ENCODE measurements at regions of chr16 and their contacts with region 1.

Region 1: DNA sequence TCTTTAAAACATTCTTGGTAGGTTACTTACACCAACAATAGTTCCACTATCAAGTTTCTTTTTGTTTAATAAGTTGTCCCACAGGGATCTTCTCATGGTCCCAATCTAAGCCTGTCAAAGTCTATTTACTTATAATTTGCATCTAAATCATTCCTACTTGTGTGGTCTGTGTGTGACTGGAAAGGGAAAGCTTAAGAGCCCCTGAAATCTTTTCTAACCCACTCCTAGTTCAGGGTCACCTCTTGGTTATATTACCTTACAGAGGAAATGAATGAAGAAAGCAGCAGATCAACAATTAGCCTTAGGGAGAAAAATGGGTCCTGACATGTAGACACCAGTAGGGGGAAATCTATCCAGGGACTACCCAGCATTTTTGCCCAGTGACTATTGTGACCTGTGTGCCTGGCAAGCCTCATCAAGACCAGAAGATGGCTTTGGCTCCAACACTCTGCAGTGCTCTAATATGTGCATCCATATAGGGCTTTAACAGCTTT is 110.4 kb upstream of the HAS3 start:
- DNase-seq: peak; percentile 53
- H3K4me3 ChIP-seq: no peak overlapping the region
- H3K27ac ChIP-seq: peak overlapping the region; percentile 69
- H3K4me1 ChIP-seq: peaks cover 40% of the 10 kb centered on the region
- H3K27me3 ChIP-seq: no peaks in the 10 kb centered on the region
- CTCF ChIP-seq: peak; percentile 34 to 48
- POLR2A ChIP-seq: no peak

Region 2: GRCh38 chr16:68943961-68944360 is 51.1 kb before region 1 on chr16:
- CTCF ChIA-PET with region 1: no interaction called
- POLR2A ChIA-PET with region 1: no interaction called
- dilution Hi-C with region 1: no loop called
- intact Hi-C with region 1: no loop called
- DNase-seq: no peak
- H3K4me3 ChIP-seq: no peak overlapping the region
- H3K27ac ChIP-seq: no peak overlapping the region
- H3K4me1 ChIP-seq: no peaks in the 10 kb centered on the region
- H3K27me3 ChIP-seq: no peaks in the 10 kb centered on the region
- CTCF ChIP-seq: no peak
- POLR2A ChIP-seq: no peak

Region 3: DNA sequence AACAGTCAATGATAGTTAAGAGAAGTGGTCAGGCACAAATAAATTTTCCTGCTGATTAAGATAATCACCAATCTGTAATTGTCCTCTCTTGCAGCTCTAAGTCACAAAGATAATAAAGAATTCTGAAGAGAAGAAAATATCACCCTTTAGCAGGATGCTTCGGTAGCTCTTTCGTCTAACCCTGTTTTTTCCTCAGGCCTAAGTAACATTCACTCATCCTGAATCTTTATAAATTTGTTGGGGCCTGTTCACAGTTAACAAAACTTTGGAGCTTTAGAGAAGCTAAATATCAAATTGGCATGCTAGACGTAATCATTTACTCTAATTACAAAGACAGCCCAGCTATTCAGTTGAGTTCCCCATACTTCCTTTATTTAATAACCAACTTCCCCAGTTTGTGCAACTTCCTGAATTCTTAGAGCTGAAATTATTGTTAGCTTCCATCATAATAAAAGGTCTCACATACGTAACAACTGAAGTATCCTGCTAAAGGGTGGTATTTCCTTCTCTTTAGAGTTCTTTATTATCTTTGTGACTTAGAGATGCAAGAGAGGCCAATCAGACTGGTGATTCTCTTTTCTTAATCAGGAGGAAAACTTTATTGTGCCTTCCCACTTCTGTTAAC is 33.2 kb before region 1 on chr16:
- CTCF ChIA-PET with region 1: interaction called, 4 read pairs
- POLR2A ChIA-PET with region 1: no interaction called
- dilution Hi-C with region 1: no loop called
- intact Hi-C with region 1: loop called (anchors 1 kb)
- DNase-seq: peak; percentile 84
- H3K4me3 ChIP-seq: no peak overlapping the region
- H3K27ac ChIP-seq: peak overlapping the region; percentile 82
- H3K4me1 ChIP-seq: peaks cover 15% of the 10 kb centered on the region
- H3K27me3 ChIP-seq: no peaks in the 10 kb centered on the region
- CTCF ChIP-seq: no peak
- POLR2A ChIP-seq: no peak

Region 4: GRCh38 chr16:69017036-69017783 is 22.2 kb after region 1 on chr16:
- CTCF ChIA-PET with region 1: interaction called, 6 read pairs
- POLR2A ChIA-PET with region 1: no interaction called
- dilution Hi-C with region 1: no loop called
- intact Hi-C with region 1: loop called (anchors 1 kb)
- DNase-seq: peak; percentile 92
- H3K4me3 ChIP-seq: no peak overlapping the region
- H3K27ac ChIP-seq: peak overlapping the region; percentile 82
- H3K4me1 ChIP-seq: peaks cover 26% of the 10 kb centered on the region
- H3K27me3 ChIP-seq: no peaks in the 10 kb centered on the region
- CTCF ChIP-seq: no peak
- POLR2A ChIP-seq: no peak

Region 5: GRCh38 chr16:69040138-69040909 is 45.3 kb after region 1 on chr16:
- CTCF ChIA-PET with region 1: no interaction called
- POLR2A ChIA-PET with region 1: no interaction called
- dilution Hi-C with region 1: no loop called
- intact Hi-C with region 1: loop called (anchors 1 kb)
- DNase-seq: peak; percentile 80
- H3K4me3 ChIP-seq: no peak overlapping the region
- H3K27ac ChIP-seq: peak overlapping the region; percentile 87
- H3K4me1 ChIP-seq: peaks cover 21% of the 10 kb centered on the region
- H3K27me3 ChIP-seq: no peaks in the 10 kb centered on the region
- CTCF ChIP-seq: no peak
- POLR2A ChIP-seq: no peak

Region 6: GRCh38 chr16:69105489-69106361 is 110.7 kb after region 1 on chr16 and contains the start of gene HAS3:
- CTCF ChIA-PET with region 1: interaction called, 11 read pairs
- POLR2A ChIA-PET with region 1: no interaction called
- dilution Hi-C with region 1: no loop called
- intact Hi-C with region 1: loop called (anchors 5 kb)
- DNase-seq: peak; percentile 69
- H3K4me3 ChIP-seq: peak within 1 kb of the TSS; percentile 40 to 57 (median 54)
- H3K27ac ChIP-seq: no peak within 1 kb of the TSS
- H3K4me1 ChIP-seq: peaks cover 21% of the 10 kb centered on the region
- H3K27me3 ChIP-seq: no peaks in the 10 kb centered on the region
- CTCF ChIP-seq: peak; percentile 16 to 32
- POLR2A ChIP-seq: peak; percentile 57
- total RNA-seq, gene HAS3: 1.8 TPM in 2 replicates

Measured in endothelial cell of umbilical vein (primary cell).